CD14-positive monocyte (primary cell): ENCODE measurements at regions of chr22 and their contacts with region 1.

Region 1: DNA sequence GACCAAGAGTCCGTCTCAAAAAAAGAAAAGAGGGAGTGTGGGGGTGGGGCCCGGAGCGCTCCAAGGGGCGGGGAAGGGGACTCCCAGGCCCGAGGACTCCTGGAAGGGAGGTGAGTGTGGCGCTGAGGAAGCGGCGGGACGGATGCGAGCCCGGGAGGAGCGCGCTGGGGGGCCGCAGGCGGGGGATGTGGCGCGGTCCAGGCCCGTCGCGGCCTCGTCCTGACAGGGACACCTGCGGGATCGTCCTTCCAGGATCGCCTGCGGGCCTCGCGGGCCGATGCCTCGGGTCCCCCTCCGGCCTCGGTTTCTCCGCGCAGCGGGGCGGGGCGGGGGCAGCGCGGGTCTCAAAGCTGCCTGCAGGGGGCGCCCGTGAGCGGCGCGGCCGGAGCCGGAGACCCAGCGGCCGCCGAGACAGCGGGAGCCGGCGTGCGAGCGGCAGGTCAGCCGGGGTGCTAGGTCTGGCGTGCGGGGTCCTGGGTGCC is 3.8 kb upstream of the ADORA2A start:
- DNase-seq: peak; percentile 56 to 78 (median 66)
- H3K4me3 ChIP-seq: peak overlapping the region in 2 of 3 experiments; percentile 73 to 77
- H3K4me3 Mint-ChIP-seq: peak overlapping the region; percentile 57 to 89
- H3K27ac ChIP-seq: peak overlapping the region in 1 of 2 donors; percentile 84
- H3K27ac Mint-ChIP-seq: peak overlapping the region in 4 of 7 donors; percentile 63 to 72 (median 68)
- H3K4me1 ChIP-seq: peaks cover 41 to 53% of the 10 kb centered on the region in 2 donors
- H3K4me1 Mint-ChIP-seq: peaks cover 39% of the 10 kb centered on the region
- H3K27me3 ChIP-seq: no peaks in the 10 kb centered on the region
- H3K27me3 Mint-ChIP-seq: peaks cover 18 to 42% (median 20%) of the 10 kb centered on the region in 3 donors
- CTCF ChIP-seq: peak; percentile 94

Region 2: DNA sequence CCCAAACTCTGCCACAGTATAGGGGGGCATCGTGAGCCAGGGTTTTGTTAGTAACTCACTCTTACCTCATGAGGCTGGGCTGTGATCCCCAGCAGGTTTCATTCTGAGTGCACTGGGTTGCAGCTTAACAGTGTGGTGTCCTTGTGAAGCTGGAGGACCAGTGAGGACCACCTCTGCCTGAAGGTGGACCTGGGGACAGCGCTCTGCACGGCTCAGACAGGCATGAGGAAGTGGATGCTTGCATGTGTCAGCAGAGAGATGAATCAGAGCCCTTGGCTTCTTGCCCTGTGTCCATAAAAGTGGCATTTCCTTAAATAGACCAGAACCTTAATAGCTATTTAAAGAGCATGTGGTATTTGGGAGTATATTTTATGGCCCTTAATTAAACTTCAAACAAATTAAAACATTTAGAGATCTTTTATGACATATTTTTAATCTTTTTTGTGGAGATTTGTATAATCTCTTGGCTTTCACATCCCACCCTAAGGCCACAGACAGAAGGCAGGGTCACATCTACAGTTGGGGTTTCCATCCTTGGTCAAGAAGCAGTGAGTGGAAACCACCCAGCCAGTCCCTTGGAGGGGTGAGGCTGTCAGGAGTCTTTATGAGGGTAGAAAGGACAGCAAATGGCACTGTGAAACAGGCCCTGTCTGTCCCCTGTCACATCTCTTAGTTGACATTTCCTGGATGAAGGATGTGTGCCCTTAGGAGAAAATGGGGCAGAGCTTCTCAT is 20.9 kb before region 1 on chr22:
- intact Hi-C with region 1: loop called in 1 of 2 experiments (anchors 2 kb)
- DNase-seq: peak; percentile 94 to 98 (median 97)
- H3K4me3 ChIP-seq: peak overlapping the region in 1 of 3 experiments; percentile 35
- H3K4me3 Mint-ChIP-seq: peak overlapping the region; percentile 57 to 67
- H3K27ac ChIP-seq: peak overlapping the region; percentile 38 to 82
- H3K27ac Mint-ChIP-seq: peak overlapping the region; percentile 89 to 98 (median 92)
- H3K4me1 ChIP-seq: peaks cover 34% of the 10 kb centered on the region in 2 donors
- H3K4me1 Mint-ChIP-seq: peaks cover 49% of the 10 kb centered on the region
- H3K27me3 ChIP-seq: no peaks in the 10 kb centered on the region
- H3K27me3 Mint-ChIP-seq: peaks cover 2% of the 10 kb centered on the region in 3 donors
- CTCF ChIP-seq: no peak

Region 3: GRCh38 chr22:24503137-24503842 is 79.7 kb after region 1 on chr22:
- intact Hi-C with region 1: loop called (anchors 2 to 5 kb)
- DNase-seq: peak; percentile 91 to 98 (median 95)
- H3K4me3 ChIP-seq: no peak overlapping the region
- H3K4me3 Mint-ChIP-seq: peak overlapping the region in 1 of 2 donors; percentile 26
- H3K27ac ChIP-seq: peak overlapping the region; percentile 66 to 79
- H3K27ac Mint-ChIP-seq: peak overlapping the region; percentile 92 to 99 (median 96)
- H3K4me1 ChIP-seq: peaks cover 64 to 65% of the 10 kb centered on the region in 2 donors
- H3K4me1 Mint-ChIP-seq: peaks cover 67% of the 10 kb centered on the region
- H3K27me3 ChIP-seq: no peaks in the 10 kb centered on the region
- H3K27me3 Mint-ChIP-seq: peaks cover 3 to 5% (median 5%) of the 10 kb centered on the region in 3 donors
- CTCF ChIP-seq: peak; percentile 83

Region 4: GRCh38 chr22:24525416-24526037 is 102.0 kb after region 1 on chr22:
- intact Hi-C with region 1: loop called (anchors 1 to 5 kb)
- DNase-seq: peak; percentile 89 to 96 (median 96)
- H3K4me3 ChIP-seq: no peak overlapping the region
- H3K4me3 Mint-ChIP-seq: no peak overlapping the region
- H3K27ac ChIP-seq: no peak overlapping the region
- H3K27ac Mint-ChIP-seq: peak overlapping the region in 6 of 7 donors; percentile 33 to 85 (median 60)
- H3K4me1 ChIP-seq: peaks cover 10 to 19% of the 10 kb centered on the region in 2 donors
- H3K4me1 Mint-ChIP-seq: peaks cover 28% of the 10 kb centered on the region
- H3K27me3 ChIP-seq: no peaks in the 10 kb centered on the region
- H3K27me3 Mint-ChIP-seq: peaks cover 0 to 1% (median 0%) of the 10 kb centered on the region in 3 donors
- CTCF ChIP-seq: peak; percentile 84